ENCODE measurements at regions of chr21 and their contacts with region 1.

Region 1: DNA sequence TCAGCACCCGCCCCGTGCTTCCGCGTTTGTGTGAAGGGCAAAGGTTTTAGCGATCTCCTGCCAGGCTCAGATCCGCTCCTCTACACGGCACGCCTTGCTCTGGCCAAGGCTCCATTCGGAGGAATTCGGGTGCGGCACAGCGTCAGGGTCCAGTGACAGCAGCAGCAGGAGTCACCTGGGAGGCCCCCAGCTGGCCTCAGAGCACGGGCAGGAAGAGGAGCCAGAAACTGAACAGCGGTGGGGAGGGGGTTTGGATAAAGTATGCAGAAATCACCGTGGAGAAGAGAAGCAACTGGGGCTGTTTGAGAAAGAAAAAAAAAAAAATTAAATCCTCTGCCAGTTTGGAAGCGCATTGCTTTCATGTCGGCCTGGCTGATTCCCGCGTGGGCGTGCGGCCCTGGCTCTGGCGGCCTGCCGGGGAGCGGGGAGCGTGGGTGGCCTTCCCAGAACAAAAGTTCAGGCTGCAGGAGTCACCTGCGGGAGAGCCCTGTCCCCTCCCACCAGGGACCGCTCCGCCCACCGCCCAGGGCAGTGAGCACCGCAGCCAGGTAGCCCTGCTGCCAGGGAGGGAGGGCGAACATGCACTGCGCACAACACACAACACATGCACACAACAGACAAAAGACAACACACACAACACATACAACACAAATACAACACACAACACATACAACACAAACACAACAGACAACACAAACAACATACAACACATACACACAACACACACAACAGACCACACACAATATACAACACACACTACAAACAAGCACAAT is 107.6 kb downstream of the ETS2 start:
- DNase-seq: no peak
- H3K4me3 Mint-ChIP-seq: no peak overlapping the region
- H3K27ac Mint-ChIP-seq: no peak overlapping the region
- H3K4me1 Mint-ChIP-seq: peaks cover 23% of the 10 kb centered on the region
- H3K27me3 Mint-ChIP-seq: peaks cover 1% of the 10 kb centered on the region

Region 2: DNA sequence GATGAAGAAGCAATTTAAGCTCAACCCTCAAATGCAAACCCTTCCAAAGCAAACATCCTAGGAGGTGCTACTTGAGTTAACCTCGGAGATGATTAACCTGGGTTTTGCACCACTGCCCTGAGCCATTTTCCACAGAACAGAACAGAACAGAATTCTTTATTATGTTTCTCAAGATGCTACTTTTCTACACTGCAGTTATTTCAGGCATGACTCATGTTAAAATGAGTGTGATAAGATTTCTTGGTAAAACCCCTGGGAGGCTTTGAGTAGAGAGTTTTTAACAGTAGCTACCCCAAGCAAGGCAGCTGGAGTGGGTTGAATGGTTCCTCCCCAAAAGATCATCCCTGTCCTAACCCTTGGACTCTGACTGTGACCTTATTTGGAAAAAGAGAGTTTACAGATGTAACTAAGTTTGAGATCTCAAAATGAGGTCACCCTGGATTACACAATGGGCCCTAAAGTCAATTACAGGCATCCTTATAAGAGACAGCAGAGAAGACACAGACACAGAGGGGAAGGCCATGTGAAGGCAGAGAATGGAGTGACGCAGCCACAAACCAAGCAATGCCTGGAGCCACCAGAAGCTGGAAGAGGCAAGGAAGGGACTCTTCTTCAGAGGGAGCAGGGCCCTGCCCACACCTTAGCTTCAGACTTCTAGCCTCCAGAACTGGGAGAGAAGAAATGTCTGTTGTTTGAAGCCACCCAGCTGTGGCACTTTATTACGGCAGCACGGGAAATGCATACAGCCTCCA is 45.8 kb after region 1 on chr21:
- intact Hi-C with region 1: loop called (anchors 2 kb)
- DNase-seq: no peak
- H3K4me3 Mint-ChIP-seq: peak overlapping the region; percentile 61
- H3K27ac Mint-ChIP-seq: peak overlapping the region; percentile 96
- H3K4me1 Mint-ChIP-seq: peaks cover 64% of the 10 kb centered on the region
- H3K27me3 Mint-ChIP-seq: no peaks in the 10 kb centered on the region

Region 3: DNA sequence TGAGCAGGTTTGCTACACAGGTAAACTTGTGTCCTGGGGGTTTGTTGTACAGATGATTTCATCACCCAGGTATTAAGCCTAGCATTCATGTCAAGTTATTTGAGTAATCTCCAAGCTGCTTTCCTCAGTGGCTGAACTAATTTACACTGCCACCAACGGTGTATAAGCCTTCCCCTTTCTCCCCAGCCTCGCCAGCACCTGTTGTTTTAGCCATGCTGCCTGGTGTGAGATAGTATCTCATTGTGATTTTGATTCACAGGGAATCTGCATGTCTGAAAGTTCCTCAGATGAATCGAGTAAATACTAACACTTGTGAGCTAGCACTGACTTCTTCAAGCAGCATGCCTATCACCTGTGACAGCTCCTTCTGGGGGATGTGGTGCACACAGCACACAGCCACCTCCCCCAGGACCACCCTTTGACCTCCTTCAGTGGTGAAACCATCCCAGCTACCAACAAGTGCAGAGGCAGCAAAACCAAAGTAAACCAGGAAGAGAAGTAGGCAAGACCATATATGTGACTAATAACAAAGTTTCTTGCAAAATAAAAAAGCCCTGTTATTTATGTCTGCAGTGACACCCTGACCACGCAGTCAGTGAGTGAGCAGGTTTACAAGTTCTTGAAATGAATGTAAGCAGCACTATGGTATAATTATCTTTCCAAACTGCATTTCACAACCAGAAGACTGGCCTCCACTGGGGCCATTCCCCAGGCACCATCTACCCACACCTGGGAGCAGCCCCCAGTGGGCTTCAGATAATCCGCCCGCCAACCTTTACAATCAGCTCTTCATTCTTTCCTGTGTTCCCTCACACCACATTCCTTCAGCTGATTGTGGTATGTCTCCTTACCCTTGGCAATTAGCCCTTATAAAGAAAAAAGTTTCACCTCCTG is 66.2 kb after region 1 on chr21:
- intact Hi-C with region 1: loop called (anchors 5 kb)
- DNase-seq: no peak
- H3K4me3 Mint-ChIP-seq: no peak overlapping the region
- H3K27ac Mint-ChIP-seq: peak overlapping the region; percentile 82
- H3K4me1 Mint-ChIP-seq: peaks cover 63% of the 10 kb centered on the region
- H3K27me3 Mint-ChIP-seq: no peaks in the 10 kb centered on the region

Measured in activated T-helper 2 cell treated with anti-CD3 and anti-CD28 coated beads, Interferon-gamma antibody, Interleukin-2, Interleukin-4, amounts not matched to agents 10 μg/mL and 5 μg/mL and 100 μg/mL, durations not matched to agents 14 hours and 24 hours and 36 hours (primary cell).